Heart right ventricle (tissue), 16 donors: ENCODE measurements at regions of chr7 and their contacts with region 1.

Region 1: DNA sequence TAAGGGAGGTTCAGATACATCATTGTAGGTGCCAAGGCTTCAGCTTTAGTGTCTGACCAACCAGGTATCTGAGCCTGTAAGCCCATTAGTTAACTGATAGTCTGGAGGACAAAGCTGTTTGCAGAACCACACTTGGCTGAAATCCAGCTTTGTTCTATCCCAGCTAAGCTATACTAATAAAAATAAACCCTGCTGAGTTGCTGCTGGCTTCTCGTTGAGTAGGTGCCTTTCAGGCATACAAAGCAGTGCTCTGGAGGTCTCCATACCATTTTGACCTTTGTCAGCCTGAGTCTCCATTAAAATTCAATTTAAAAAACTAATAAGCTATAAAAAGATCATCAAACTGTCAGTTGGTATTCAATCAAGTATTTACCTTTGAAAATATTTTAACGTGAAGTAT is 22.0 kb downstream of the CDCA7L start:
- DNase-seq: peak in 1 of 2 donors; percentile 48
- ATAC-seq: peak; percentile 71 to 95 (median 85)
- H3K4me3 ChIP-seq: no peak overlapping the region
- H3K27ac ChIP-seq: peak overlapping the region in 6 of 10 donors; percentile 13 to 57 (median 44)
- H3K4me1 ChIP-seq: peaks cover 0 to 50% (median 12%) of the 10 kb centered on the region in 9 donors
- H3K27me3 ChIP-seq: no peaks in the 10 kb centered on the region
- CTCF ChIP-seq: no peak

Region 2: DNA sequence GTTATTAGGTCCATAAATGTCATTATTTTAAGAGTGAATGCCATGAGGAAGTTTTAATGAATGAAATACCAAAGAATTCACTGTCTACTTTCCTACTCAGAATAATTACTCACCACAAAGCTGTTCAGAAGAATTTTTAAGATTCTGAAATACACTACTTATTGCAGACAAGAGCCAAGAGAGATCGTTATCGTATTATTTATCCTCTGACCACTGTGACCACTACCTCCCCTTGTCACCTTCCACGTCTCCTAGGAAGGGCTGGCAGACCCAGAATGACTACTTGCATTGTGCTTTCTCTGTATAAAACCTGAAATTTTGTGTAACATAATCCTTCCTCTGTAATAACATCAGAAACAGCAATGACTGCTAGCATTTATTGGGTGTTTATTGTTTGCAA is 1226.3 kb before region 1 on chr7:
- intact Hi-C with region 1: no loop called
- DNase-seq: no peak
- ATAC-seq: no peak
- H3K4me3 ChIP-seq: no peak overlapping the region
- H3K27ac ChIP-seq: no peak overlapping the region
- H3K4me1 ChIP-seq: no peaks in the 10 kb centered on the region
- H3K27me3 ChIP-seq: peaks cover 0 to 18% (median 10%) of the 10 kb centered on the region in 7 donors
- CTCF ChIP-seq: no peak

Region 3: DNA sequence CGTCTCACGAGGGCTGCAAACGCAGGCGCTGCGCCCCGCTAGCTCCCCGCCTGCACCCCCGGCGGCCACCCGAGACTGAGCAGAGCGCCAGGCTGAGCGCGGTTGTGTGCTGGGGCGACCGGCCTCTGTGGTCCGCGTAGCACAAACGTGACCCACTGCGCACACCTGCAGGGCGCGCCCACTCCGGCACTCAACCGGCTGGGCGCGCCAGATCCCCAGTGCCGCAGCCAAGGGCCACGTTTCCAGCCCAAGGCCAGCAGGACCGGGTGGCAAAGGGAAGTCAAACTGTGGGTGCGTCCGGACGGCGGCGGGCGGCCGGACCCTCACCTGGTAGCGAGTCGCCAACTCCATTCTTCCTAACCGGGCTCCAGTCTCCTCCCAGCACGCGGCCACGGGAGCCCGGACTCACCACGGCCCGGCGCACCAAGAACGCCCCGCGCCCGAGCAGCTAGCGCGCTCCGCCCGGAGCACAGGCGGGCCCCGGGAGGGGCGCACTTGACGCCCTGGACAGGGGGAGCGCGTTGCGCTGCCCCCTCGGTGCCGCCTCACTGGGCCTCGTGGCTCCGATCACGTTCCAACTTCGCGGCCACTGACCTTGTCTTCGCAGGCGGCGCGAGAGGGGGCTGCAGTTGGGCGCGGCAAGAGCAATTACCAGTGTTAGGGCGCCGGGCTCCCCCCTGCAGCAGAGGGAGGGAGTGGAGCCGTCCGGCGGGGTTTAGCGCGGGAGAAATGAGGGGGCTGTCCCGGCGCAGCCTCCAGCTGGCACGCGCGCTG is 22.0 kb after region 1 on chr7 and contains the start of gene CDCA7L:
- intact Hi-C with region 1: loop called in 1 of 10 experiments (anchors 2 kb)
- DNase-seq: peak; percentile 67 to 85
- ATAC-seq: peak; percentile 92 to 97 (median 95)
- H3K4me3 ChIP-seq: peak within 1 kb of the TSS; percentile 54 to 84 (median 70)
- H3K27ac ChIP-seq: peak within 1 kb of the TSS; percentile 68 to 93 (median 84)
- H3K4me1 ChIP-seq: peaks cover 0 to 52% (median 24%) of the 10 kb centered on the region in 9 donors
- H3K27me3 ChIP-seq: peaks cover 0 to 4% (median 0%) of the 10 kb centered on the region in 7 donors
- CTCF ChIP-seq: peak in 1 of 9 donors; percentile 10
- total RNA-seq, gene CDCA7L: 31.2 to 59.1 (median 43.8) TPM

Region 4: GRCh38 chr7:22066484-22066883 is 142.8 kb after region 1 on chr7:
- intact Hi-C with region 1: no loop called
- DNase-seq: no peak
- ATAC-seq: no peak
- H3K4me3 ChIP-seq: no peak overlapping the region
- H3K27ac ChIP-seq: no peak overlapping the region
- H3K4me1 ChIP-seq: no peaks in the 10 kb centered on the region
- H3K27me3 ChIP-seq: peaks cover 0 to 64% (median 13%) of the 10 kb centered on the region in 7 donors
- CTCF ChIP-seq: no peak